CD8-positive, alpha-beta T cell (primary cell): ENCODE measurements at regions of chr1 and their contacts with region 1.

Region 1: DNA sequence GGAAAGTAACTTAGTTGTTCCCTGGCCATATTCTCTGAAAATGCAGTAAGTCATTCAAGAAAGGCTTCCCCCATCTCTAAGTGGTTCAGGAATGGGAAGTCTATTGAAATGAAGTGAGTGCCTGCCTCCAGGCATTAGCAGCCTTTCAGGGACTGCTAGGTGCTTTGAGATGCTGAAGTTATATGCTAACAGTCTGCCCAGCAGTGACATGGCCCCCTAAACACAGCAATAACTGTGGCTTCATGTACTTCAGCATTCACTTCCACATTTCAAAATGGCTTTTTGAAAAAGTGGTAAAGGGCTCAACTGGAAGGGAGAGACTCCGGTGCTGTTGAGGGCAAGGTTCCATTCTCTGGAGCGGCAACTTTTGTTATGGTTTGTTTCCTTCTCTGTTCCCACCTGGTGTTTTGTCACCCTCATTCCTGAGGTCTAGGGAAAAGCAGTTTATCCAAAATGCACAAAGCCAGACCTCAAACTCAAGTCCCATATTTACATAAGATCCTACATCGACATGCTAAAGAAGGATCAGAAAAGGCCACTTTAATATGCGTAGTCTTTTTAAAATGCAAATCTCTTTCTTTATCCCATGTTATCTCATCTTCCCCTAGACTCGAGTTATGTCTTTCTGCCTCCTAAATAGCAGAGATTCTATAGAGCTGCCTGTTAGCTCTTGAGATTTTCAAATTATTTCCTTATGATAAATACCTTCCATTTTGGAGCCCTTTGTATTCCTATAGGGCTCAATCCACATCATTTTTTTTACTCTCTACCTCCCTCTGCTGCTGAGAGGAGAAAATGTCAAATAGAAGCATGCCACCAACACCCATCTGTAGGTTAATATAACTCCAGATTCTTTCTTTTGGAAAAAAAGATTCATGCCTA is 34.2 kb upstream of the LRRC8C start:
- DNase-seq: peak in 2 of 9 experiments; percentile 55 to 67
- ATAC-seq: peak; percentile 64
- H3K4me3 ChIP-seq: no peak overlapping the region
- H3K4me3 Mint-ChIP-seq: no peak overlapping the region
- H3K27ac ChIP-seq: no peak overlapping the region
- H3K27ac Mint-ChIP-seq: peak overlapping the region; percentile 66
- H3K4me1 ChIP-seq: peaks cover 49% of the 10 kb centered on the region
- H3K4me1 Mint-ChIP-seq: peaks cover 83% of the 10 kb centered on the region
- H3K27me3 ChIP-seq: no peaks in the 10 kb centered on the region
- H3K27me3 Mint-ChIP-seq: no peaks in the 10 kb centered on the region
- CTCF ChIP-seq: peak; percentile 70

Region 2: DNA sequence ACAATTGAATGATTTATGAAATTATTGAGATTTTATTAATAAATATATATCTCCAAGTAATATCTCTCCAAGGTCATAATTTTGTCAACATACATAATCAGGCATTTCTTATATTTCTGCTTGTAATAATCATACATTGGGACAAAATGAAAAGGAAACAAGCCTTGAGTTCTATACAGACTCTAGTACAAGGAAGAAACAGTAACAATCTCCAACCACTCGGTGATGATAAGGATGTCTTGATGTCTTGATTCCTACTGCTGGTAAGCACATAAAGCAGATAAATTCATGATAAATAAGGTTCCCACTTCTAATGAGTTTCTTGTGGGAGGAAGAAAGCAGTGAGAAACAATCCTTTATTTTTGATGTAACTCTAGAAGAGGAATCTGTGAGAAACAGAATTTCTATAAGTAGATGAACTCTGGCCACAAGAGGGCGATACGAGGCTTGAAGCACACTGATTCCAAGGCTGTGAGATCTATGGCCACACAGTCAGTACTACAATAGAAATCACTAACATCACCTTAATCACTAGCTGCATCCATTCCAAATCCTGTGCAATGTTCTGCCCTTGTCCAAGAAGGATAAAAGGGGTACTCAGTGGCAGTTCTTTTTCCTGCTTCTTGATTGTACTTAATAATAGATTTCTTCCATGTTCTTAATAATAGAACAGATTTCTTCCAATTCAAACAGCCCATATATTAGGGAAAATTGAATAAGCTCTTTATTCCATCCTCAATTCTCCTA is 115.5 kb before region 1 on chr1:
- CTCF ChIA-PET with region 1: interaction called, 6 read pairs
- POLR2A ChIA-PET with region 1: no interaction called
- intact Hi-C with region 1: loop called (anchors 1 to 5 kb)
- DNase-seq: peak; percentile 48 to 85 (median 79)
- ATAC-seq: peak; percentile 92
- H3K4me3 ChIP-seq: no peak overlapping the region
- H3K4me3 Mint-ChIP-seq: no peak overlapping the region
- H3K27ac ChIP-seq: no peak overlapping the region
- H3K27ac Mint-ChIP-seq: no peak overlapping the region
- H3K4me1 ChIP-seq: no peaks in the 10 kb centered on the region
- H3K4me1 Mint-ChIP-seq: peaks cover 9% of the 10 kb centered on the region
- H3K27me3 ChIP-seq: no peaks in the 10 kb centered on the region
- H3K27me3 Mint-ChIP-seq: peaks cover 4% of the 10 kb centered on the region
- CTCF ChIP-seq: peak; percentile 72

Region 3: DNA sequence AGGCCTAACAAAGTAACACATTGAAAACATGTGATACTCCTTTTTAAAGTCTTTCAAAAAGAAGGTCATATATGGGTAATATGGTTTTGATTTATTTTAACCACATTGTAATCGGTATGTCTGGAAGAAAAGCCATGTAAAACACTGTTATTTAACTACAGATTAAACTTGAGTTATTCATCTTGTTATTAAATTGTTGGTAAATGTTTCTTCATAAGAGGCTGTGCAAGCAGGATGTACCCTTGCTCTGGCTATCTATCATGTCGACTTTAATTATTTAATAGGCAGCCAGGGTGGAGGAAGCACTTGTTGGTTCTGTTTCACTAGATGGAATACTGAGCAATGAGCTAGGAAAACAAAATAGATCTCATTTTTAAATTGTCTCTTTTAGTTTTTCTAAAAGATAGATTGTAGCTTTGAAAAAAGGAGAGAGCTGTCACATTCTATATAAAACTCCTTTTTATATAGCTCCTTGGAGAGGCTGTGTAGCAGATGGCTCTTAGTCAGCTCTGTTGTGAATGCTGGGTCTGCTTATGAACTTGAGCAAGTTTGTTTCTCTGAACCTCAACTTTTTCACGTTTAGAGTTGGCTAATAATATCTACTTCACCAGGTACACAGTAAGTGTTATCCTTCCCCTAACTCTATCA is 34.6 kb before region 1 on chr1:
- CTCF ChIA-PET with region 1: no interaction called
- POLR2A ChIA-PET with region 1: no interaction called
- intact Hi-C with region 1: no loop called
- DNase-seq: no peak
- ATAC-seq: no peak
- H3K4me3 ChIP-seq: no peak overlapping the region
- H3K4me3 Mint-ChIP-seq: no peak overlapping the region
- H3K27ac ChIP-seq: no peak overlapping the region
- H3K27ac Mint-ChIP-seq: no peak overlapping the region
- H3K4me1 ChIP-seq: no peaks in the 10 kb centered on the region
- H3K4me1 Mint-ChIP-seq: peaks cover 40% of the 10 kb centered on the region
- H3K27me3 ChIP-seq: no peaks in the 10 kb centered on the region
- H3K27me3 Mint-ChIP-seq: no peaks in the 10 kb centered on the region
- CTCF ChIP-seq: no peak

Region 4: DNA sequence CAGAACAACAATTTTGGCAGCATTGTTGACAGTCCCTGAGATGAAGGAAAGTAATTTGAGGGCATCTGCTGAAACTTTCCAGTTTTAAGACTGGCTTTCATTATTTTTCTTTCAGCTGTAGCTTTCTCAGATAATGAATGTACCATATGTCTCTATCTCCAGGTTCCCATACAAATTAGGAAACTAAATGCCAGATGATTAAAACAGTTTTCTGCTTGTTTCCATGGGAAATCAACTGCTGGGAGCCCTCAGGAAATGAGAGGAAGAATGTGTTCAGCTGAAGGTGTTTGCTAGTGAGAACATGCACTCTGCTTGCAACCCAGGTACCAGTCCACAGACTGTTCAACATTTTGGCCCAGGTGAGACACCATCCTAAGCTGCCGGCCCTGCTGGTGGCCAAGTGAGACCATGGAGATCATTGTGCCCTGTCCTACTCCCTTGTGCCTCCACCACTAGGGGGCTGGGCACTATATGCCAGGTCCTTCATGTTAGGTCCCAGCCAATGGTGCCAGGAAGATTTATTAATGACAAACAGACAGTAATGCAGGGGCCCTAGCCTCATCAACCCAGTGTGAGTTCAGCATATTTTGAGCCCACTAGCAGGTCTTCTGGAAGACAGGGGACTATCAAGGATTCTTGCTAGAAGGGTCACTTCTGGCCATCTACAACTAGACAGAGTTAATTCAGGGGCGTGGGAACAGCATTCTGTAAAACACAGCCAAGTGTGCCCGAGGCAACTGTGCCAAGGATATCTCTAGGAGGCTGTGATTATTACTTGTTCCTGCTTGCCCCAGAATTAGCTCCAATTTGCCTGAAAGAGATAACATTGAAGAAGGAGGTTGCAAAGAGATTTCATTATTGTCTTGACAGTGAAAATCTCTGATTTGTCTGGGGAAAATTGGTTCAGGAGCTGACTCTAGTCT is 17.2 kb after region 1 on chr1:
- CTCF ChIA-PET with region 1: interaction called, 401 read pairs
- POLR2A ChIA-PET with region 1: interaction called, 285 read pairs
- intact Hi-C with region 1: no loop called
- DNase-seq: peak in 3 of 9 experiments; percentile 27 to 59 (median 49)
- ATAC-seq: no peak
- H3K4me3 ChIP-seq: no peak overlapping the region
- H3K4me3 Mint-ChIP-seq: no peak overlapping the region
- H3K27ac ChIP-seq: no peak overlapping the region
- H3K27ac Mint-ChIP-seq: no peak overlapping the region
- H3K4me1 ChIP-seq: peaks cover 43% of the 10 kb centered on the region
- H3K4me1 Mint-ChIP-seq: peaks cover 73% of the 10 kb centered on the region
- H3K27me3 ChIP-seq: no peaks in the 10 kb centered on the region
- H3K27me3 Mint-ChIP-seq: no peaks in the 10 kb centered on the region
- CTCF ChIP-seq: no peak

Region 5: DNA sequence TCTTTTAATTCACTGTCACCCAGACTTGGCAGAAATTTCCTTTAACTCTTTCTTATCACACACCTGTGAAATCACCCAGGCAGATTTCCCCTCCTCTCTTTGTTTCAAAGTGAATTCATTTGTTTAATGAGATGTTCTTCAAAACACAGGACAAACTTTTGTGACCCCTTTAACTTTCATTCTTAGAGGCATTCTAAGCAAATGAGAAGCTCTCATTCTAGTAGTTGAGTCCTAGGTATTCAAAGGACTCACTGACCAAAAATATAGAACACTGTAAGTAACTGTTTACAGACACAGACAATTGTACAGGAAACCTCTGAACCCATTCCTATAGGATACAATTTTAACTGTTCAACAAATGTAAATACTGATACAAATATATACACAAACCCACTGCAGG is 51.1 kb after region 1 on chr1:
- CTCF ChIA-PET with region 1: no interaction called
- POLR2A ChIA-PET with region 1: no interaction called
- intact Hi-C with region 1: no loop called
- DNase-seq: no peak
- ATAC-seq: no peak
- H3K4me3 ChIP-seq: no peak overlapping the region
- H3K4me3 Mint-ChIP-seq: peak overlapping the region; percentile 9
- H3K27ac ChIP-seq: peak overlapping the region in 1 of 2 experiments; percentile 39
- H3K27ac Mint-ChIP-seq: peak overlapping the region; percentile 73
- H3K4me1 ChIP-seq: peaks cover 54% of the 10 kb centered on the region
- H3K4me1 Mint-ChIP-seq: peaks cover 70% of the 10 kb centered on the region
- H3K27me3 ChIP-seq: no peaks in the 10 kb centered on the region
- H3K27me3 Mint-ChIP-seq: no peaks in the 10 kb centered on the region
- CTCF ChIP-seq: no peak